Pancreas (tissue), 10 donors: ENCODE measurements at regions of chr11 and their contacts with region 1.

Region 1: DNA sequence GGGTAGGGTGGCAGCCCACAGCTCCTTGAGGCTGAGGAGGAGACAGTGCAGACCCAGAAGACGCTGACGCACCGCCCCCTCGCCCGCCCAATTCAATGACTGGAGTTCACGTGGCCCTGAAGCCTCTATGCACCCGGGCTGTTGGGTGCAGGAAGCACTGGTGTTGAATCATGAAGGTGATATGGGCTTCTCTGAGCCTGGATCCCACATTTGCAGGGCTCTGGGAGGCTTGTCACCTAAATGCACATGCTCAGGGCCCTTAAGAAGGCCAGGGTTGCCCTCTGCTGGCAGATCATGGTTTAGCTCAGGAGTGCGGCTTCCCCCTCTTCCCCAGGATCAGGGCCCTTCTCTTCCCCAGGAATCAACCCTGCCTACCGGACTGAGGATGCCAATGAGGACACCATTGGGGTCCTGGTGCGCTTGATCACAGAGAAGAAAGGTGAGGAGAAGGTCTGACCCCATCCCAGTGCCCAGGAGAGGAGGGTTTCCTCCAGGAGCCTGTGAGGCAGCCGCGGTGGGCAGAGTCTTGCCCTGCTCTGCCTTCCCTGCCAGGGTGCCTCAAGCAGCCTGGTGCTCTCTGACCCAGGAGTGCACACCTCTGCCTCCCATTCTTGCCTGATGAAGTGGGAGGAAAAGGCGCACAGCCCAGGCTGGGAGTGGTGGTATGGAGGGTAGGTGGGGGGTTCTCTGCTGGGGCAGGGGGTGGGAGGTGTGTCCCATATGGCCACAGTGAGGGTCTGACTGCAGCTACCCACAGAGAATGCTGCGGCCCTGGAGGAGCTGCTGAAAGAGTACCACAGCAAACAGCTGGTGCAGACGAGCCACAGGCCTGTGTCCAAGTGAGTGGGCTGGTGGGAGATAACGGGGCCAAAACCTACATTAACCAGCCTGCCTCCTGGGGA is 17.5 kb downstream of the RELT start:
- DNase-seq: peak; percentile 47 to 85 (median 74)
- ATAC-seq: peak; percentile 80 to 91 (median 90)
- H3K4me3 ChIP-seq: no peak overlapping the region
- H3K27ac ChIP-seq: no peak overlapping the region
- H3K4me1 ChIP-seq: no peaks in the 10 kb centered on the region
- H3K27me3 ChIP-seq: no peaks in the 10 kb centered on the region
- CTCF ChIP-seq: peak; percentile 49 to 73 (median 63)

Region 2: DNA sequence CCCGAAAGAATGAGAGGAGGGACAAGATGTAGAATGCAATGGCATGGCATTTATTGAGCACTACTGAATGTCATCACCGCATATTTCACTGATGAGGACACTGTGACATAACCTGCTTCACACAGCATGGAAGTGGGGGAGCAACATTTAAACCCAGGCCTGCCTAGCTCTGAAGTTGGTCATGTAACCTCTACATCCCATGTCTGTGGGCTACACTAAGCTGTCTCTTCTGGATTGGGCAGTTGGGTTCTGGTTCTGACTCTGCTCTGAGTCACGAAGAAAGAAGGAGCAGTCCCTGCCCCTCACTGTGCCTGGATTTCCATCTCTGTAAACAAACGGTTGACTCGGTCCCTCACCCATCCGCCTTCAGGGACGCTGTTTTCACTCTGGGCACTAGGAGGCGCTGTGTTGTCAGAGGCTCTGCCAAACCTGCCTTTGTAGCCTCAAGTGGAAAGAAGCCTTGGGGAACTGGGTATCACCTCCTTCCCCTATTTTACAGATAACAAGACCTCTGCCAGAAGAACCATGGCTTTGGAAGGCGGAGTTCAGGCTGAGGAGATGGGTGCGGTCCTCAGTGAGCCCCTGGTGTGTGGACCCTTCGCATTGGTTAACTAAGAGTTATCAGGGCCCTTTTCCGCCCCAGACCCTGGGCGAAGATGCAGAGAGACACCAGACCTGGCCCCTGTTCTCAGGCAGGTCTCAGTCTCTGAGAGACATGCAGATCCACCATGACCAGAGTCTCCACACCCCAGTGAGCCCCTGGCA is 98.3 kb before region 1 on chr11:
- intact Hi-C with region 1: loop called in 1 of 3 experiments (anchors 10 kb)
- DNase-seq: peak in 4 of 6 donors; percentile 30 to 87 (median 67)
- ATAC-seq: peak; percentile 56 to 87 (median 70)
- H3K4me3 ChIP-seq: no peak overlapping the region
- H3K27ac ChIP-seq: no peak overlapping the region
- H3K4me1 ChIP-seq: no peaks in the 10 kb centered on the region
- H3K27me3 ChIP-seq: no peaks in the 10 kb centered on the region
- CTCF ChIP-seq: peak; percentile 72 to 86 (median 80)

Region 3: GRCh38 chr11:73347067-73347466 is 46.7 kb before region 1 on chr11:
- intact Hi-C with region 1: loop called in 1 of 3 experiments (anchors 5 kb)
- DNase-seq: no peak
- ATAC-seq: no peak
- H3K4me3 ChIP-seq: no peak overlapping the region
- H3K27ac ChIP-seq: no peak overlapping the region
- H3K4me1 ChIP-seq: peaks cover 0 to 3% (median 0%) of the 10 kb centered on the region in 3 donors
- H3K27me3 ChIP-seq: no peaks in the 10 kb centered on the region
- CTCF ChIP-seq: no peak

Region 4: DNA sequence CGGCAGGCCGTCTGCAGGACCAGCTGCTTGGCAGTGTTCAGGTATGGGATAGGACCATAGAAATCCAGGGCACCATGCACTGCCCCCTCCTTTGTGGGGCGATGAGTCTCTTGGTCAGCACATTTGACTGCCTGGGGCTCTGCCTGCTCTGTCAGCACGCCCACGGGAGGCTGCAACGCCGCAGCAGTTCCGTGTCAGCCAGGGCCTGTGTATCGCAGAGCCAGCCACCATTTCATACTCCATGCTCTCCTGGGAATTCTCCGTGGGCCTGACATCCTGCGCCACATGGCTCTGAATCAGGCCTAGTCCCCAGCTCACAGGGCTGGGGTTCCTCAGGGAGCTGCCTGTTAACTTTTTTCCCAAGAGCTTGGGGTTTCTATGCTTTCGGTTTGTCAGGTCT is 34.4 kb before region 1 on chr11:
- intact Hi-C with region 1: loop called in 1 of 3 experiments (anchors 5 kb)
- DNase-seq: no peak
- ATAC-seq: peak in 3 of 4 donors; percentile 36 to 59 (median 36)
- H3K4me3 ChIP-seq: no peak overlapping the region
- H3K27ac ChIP-seq: no peak overlapping the region
- H3K4me1 ChIP-seq: no peaks in the 10 kb centered on the region
- H3K27me3 ChIP-seq: no peaks in the 10 kb centered on the region
- CTCF ChIP-seq: no peak

Region 5: GRCh38 chr11:73652046-73652730 is 258.5 kb after region 1 on chr11:
- intact Hi-C with region 1: loop called in 1 of 3 experiments (anchors 10 kb)
- DNase-seq: peak in 5 of 6 donors; percentile 31 to 60 (median 51)
- ATAC-seq: peak; percentile 20 to 67 (median 41)
- H3K4me3 ChIP-seq: no peak overlapping the region
- H3K27ac ChIP-seq: peak overlapping the region in 2 of 4 donors; percentile 5 to 58
- H3K4me1 ChIP-seq: no peaks in the 10 kb centered on the region
- H3K27me3 ChIP-seq: no peaks in the 10 kb centered on the region
- CTCF ChIP-seq: no peak